Lower leg skin (tissue), 4 donors: ENCODE measurements at regions of chr7 and their contacts with region 1.

Region 1: DNA sequence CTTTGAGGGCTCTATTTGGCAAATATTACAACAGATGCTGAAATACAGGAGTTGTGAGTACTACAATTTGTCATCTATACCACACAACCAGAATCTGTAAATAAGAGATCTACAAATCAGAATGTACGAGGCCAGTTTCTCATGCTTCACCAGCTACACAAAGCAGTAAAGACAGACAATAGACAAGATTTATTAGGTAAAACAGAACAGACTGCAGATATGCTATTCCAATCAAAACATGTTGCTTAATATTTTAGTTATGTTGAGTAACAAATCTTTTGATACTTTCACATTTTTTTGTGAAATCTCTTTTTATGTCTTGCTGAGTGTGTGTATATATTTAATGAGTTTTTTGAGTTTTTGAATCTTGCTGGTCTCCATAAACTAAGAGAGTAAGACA is 109.1 kb downstream of the CHCHD3 start:
- DNase-seq: no peak
- H3K4me3 ChIP-seq: no peak overlapping the region
- CTCF ChIP-seq: no peak
- POLR2A ChIP-seq: no peak

Region 2: DNA sequence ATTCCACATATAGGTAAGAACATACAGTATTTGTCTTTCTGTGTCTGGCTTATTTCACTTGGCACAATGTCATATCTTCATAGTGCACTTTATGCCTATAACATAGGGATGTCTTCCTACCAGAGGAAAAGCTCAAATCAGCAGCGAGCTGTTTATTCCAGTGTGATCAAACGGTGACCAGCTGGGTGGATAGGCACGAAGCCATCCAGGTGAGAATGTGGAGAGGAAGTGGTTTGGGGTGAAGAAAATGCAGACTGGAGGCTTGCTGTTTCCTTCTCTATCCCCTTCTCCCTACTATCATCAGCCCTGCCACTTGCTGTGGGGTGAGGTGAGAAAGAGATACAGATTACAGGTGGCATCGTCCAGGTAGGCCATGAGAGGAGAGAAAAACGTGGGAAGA is 56.7 kb after region 1 on chr7:
- intact Hi-C with region 1: loop called (anchors 2 kb)
- DNase-seq: no peak
- H3K4me3 ChIP-seq: no peak overlapping the region
- CTCF ChIP-seq: no peak
- POLR2A ChIP-seq: no peak